ENCODE measurements at regions of chr15 and their contacts with region 1.

Region 1: GRCh38 chr15:23497710-23498111 is 50.7 kb upstream of the GOLGA6L2 start:
- DNase-seq: peak; percentile 20
- H3K4me3 ChIP-seq: no peak overlapping the region
- H3K27ac ChIP-seq: no peak overlapping the region
- H3K4me1 ChIP-seq: no peaks in the 10 kb centered on the region
- H3K27me3 ChIP-seq: 0 out of 2 replicates have a peak, but pooled peaks cover 3% of the 10 kb centered on the region
- CTCF ChIP-seq: peak; percentile 54
- EP300 ChIP-seq: no peak
- RAD21 ChIP-seq: peak; percentile 49

Region 2: GRCh38 chr15:23483821-23484299 is 13.9 kb before region 1 on chr15:
- CTCF ChIA-PET with region 1: interaction called, 21 read pairs
- POLR2A ChIA-PET with region 1: no interaction called
- DNase-seq: no peak
- H3K4me3 ChIP-seq: no peak overlapping the region
- H3K27ac ChIP-seq: no peak overlapping the region
- H3K4me1 ChIP-seq: no peaks in the 10 kb centered on the region
- H3K27me3 ChIP-seq: no peaks in the 10 kb centered on the region; the same call in 1 of the 2 replicates
- CTCF ChIP-seq: no peak
- EP300 ChIP-seq: no peak
- RAD21 ChIP-seq: no peak

Region 3: DNA sequence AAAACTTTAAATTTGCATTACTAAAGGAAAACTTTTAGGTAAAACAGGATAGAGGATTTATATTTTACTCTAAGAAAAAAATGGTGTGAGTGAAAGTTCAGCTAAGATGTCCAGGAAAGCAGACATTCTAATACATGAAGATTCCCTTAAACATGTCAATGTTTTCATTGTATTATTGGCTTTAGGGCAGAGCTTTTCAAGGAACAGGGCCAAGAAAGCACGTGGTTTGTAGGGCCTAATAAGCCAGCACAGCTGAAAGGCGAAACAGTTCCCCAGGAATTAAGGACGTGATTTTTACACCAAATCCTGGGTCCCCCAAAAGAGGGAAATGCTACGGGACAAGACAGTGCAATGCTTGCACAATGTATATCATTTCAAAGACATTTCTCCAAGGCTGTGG is 19.2 kb after region 1 on chr15:
- CTCF ChIA-PET with region 1: interaction called, 21 read pairs
- POLR2A ChIA-PET with region 1: no interaction called
- DNase-seq: no peak
- H3K4me3 ChIP-seq: no peak overlapping the region
- H3K27ac ChIP-seq: no peak overlapping the region
- H3K4me1 ChIP-seq: no peaks in the 10 kb centered on the region
- H3K27me3 ChIP-seq: no peaks in the 10 kb centered on the region
- CTCF ChIP-seq: no peak
- EP300 ChIP-seq: no peak
- RAD21 ChIP-seq: no peak